G401 (cell line): ENCODE measurements at regions of chr6 and their contacts with region 1.

Region 1: GRCh38 chr6:43948527-43949485 is 178.4 kb downstream of the MRPL14 start:
- DNase-seq: no peak

Region 2: DNA sequence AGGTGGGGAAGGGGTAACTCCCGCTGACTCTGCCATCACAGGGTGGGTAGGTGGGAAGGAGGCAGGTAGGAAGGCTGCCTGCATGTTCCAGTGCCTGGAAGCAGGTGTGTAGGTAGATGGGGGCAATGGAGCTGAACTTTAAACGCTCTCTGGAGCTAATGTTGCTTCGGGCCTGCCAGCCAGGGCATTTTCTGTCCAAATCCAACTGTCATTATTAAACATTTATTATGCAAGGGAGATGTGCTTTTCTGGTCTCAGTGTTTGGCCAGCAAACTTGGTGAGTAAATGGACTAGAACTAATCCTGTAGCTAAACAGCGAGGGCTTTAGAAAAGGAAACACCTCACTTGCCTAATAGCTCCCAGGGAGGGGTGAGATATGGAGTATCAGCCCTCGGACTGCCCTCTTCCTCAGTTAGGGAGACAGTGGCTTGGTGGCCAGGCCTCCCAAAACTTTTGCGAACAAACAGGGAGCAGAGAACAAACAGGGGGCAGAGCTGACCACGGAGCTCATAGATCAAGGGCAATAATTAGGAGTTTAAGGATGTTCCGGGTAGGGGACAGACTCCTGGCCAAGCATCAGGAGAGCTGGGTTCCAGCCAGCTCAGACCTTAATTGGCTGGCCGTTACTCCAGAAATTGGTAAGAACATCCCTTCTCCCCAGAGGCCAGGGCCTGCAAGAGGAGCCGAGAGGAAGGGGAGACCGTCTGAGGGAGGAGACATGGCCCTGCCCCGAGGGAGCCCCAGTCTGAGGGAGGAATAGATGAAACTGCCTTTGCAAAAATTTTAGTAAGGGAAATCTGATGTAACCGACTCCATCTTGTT is 47.7 kb before region 1 on chr6:
- in situ Hi-C with region 1: loop called (anchors 5 kb)
- DNase-seq: no peak